Activated CD8-positive, alpha-beta T cell treated with anti-CD3 and anti-CD28 coated beads for 36 hours (primary cell): ENCODE measurements at regions of chr1 and their contacts with region 1.

Region 1: DNA sequence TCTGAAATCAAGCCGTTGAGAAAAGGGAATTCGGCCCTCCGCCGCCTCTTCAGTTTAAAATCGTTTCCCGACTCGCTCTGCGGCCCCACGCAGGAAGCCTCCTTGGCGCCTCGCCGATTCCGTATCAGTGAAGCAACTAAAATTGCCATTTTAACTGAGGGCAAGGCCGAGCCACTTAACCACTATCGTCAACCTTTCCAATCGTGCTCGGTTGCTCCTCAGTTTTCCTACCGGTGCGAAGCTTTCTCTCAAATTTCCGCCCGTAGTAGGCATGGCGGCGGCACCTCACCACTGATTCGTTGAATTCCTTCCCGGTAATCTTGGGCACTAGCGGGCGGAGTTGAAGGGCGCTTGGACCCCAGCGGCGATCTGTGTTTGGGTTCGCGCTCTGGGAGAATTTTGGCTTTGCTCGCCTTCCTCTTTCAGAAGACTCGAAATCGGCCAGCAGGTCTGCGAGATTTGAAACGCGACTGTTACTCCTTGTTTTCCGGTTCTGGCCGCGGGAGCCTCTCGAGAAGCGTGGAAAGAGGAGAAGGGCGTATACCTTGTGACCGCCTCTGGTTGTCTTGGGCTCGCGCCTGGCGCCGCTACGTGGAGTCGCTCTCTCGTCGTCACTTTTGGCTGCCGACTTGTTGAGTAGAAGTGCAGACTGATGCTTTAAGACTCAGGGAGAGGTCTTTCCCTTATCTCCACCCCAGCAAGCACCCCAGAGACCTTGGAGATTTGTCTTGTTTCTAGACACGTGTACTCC is at the starts of genes CENPL and DARS2:
- DNase-seq: peak; percentile 95
- ATAC-seq: peak; percentile 90
- H3K4me3 Mint-ChIP-seq: peak within 1 kb of the TSS; percentile 94
- H3K27ac Mint-ChIP-seq: peak within 1 kb of the TSS; percentile 99
- H3K4me1 Mint-ChIP-seq: peaks cover 50% of the 10 kb centered on the region
- H3K27me3 Mint-ChIP-seq: no peaks in the 10 kb centered on the region
- CTCF ChIP-seq: no peak
- total RNA-seq, gene CENPL: 20.9 to 23.3 TPM
- total RNA-seq, gene DARS2: 46.7 to 49.5 TPM

Region 2: GRCh38 chr1:173429471-173430402 is 394.8 kb before region 1 on chr1:
- CTCF ChIA-PET with region 1: interaction called, 37 read pairs
- POLR2A ChIA-PET with region 1: interaction called, 8 read pairs
- intact Hi-C with region 1: loop called (anchors 2 kb)
- DNase-seq: peak; percentile 84
- ATAC-seq: peak; percentile 85
- H3K4me3 Mint-ChIP-seq: peak overlapping the region; percentile 62
- H3K27ac Mint-ChIP-seq: peak overlapping the region; percentile 86
- H3K4me1 Mint-ChIP-seq: peaks cover 25% of the 10 kb centered on the region
- H3K27me3 Mint-ChIP-seq: no peaks in the 10 kb centered on the region
- CTCF ChIP-seq: peak; percentile 88

Region 3: GRCh38 chr1:173476664-173477285 is 347.7 kb before region 1 on chr1:
- CTCF ChIA-PET with region 1: no interaction called
- POLR2A ChIA-PET with region 1: interaction called, 11 read pairs
- intact Hi-C with region 1: no loop called
- DNase-seq: peak; percentile 84
- ATAC-seq: peak; percentile 84
- H3K4me3 Mint-ChIP-seq: peak overlapping the region; percentile 83
- H3K27ac Mint-ChIP-seq: peak overlapping the region; percentile 95
- H3K4me1 Mint-ChIP-seq: peaks cover 61% of the 10 kb centered on the region
- H3K27me3 Mint-ChIP-seq: no peaks in the 10 kb centered on the region
- CTCF ChIP-seq: no peak

Region 4: GRCh38 chr1:173648880-173649605 is 175.5 kb before region 1 on chr1:
- CTCF ChIA-PET with region 1: no interaction called
- POLR2A ChIA-PET with region 1: no interaction called
- intact Hi-C with region 1: no loop called
- DNase-seq: no peak
- ATAC-seq: no peak
- H3K4me3 Mint-ChIP-seq: no peak overlapping the region
- H3K27ac Mint-ChIP-seq: no peak overlapping the region
- H3K4me1 Mint-ChIP-seq: no peaks in the 10 kb centered on the region
- H3K27me3 Mint-ChIP-seq: no peaks in the 10 kb centered on the region
- CTCF ChIP-seq: no peak

Region 5: DNA sequence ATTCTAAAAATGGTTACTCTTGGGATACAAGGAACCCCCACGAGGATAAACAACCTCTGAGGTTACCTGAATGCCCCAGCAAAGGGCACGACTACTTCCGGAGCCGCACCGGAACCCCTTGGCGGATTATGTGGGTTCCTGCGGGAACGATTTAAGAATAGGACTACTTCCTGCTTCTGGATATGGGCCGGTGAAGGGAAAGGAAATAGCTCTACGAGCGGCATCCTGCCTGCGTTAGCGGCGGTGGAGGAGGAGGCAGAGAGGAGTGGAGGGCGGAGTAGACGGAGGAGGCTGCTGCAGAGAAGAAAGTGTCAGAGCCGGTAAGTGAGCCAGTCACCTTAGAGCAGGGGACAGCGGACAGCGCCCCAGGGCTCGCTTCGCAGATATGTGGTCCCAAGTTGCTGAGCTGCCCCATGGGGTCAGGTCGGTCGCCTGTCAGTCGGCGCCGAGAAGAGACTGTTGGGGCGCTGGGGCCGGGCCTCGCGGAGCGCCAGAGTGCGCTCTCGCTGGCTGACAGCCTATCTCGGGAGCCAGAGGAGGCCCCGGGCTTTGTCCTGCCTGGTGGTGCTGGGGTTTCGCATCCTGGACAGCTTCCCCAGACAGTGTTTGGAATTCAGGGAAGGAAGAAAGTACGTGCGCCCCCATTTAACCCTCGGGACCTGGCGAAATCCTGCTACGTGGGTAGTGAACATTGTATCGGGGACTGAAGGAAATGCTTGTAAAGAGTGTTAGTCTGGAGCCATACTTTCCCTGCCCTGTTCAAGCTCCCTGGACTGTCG is 109.6 kb before region 1 on chr1 and contains the start of gene KLHL20:
- CTCF ChIA-PET with region 1: interaction called, 7 read pairs
- POLR2A ChIA-PET with region 1: interaction called, 6 read pairs
- intact Hi-C with region 1: loop called (anchors 5 kb)
- DNase-seq: peak; percentile 90
- ATAC-seq: peak; percentile 98
- H3K4me3 Mint-ChIP-seq: peak within 1 kb of the TSS; percentile 92
- H3K27ac Mint-ChIP-seq: peak within 1 kb of the TSS; percentile 94
- H3K4me1 Mint-ChIP-seq: peaks cover 13% of the 10 kb centered on the region
- H3K27me3 Mint-ChIP-seq: peaks cover 12% of the 10 kb centered on the region
- CTCF ChIP-seq: no peak
- total RNA-seq, gene KLHL20: 14.5 to 15.8 TPM

Region 6: DNA sequence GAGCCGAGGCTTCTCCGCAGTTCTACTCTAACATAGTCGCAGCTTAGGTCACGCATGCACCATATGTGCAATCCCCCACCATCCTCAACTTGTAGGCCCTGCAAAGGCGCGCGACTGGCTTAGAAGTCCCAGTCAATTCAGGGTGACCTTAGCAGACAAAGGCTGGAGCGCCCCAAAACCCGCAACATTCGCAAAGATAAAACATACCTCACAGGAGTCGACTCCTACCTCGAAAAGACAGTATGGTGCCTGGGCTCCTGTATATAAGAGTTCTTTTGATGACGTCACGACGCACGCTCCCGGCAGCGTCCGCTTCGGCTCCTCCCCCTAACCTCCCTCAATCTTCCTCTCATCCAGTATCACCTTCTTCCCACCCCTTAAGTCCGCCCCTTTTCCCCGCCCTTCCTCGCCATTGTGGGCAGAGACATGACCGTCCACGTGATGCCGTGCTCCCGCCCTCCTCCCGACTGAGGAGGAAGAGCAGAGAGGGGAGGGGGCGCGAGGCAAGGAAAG is 43.3 kb after region 1 on chr1 and contains the start of gene GAS5:
- CTCF ChIA-PET with region 1: no interaction called
- POLR2A ChIA-PET with region 1: interaction called, 29 read pairs
- intact Hi-C with region 1: loop called (anchors 2 kb)
- DNase-seq: peak; percentile 100
- ATAC-seq: peak; percentile 80
- H3K4me3 Mint-ChIP-seq: peak within 1 kb of the TSS; percentile 95
- H3K27ac Mint-ChIP-seq: peak within 1 kb of the TSS; percentile 97
- H3K4me1 Mint-ChIP-seq: peaks cover 52% of the 10 kb centered on the region
- H3K27me3 Mint-ChIP-seq: no peaks in the 10 kb centered on the region
- CTCF ChIP-seq: no peak
- total RNA-seq, gene GAS5: 1,276 to 1,298 TPM

Region 7: DNA sequence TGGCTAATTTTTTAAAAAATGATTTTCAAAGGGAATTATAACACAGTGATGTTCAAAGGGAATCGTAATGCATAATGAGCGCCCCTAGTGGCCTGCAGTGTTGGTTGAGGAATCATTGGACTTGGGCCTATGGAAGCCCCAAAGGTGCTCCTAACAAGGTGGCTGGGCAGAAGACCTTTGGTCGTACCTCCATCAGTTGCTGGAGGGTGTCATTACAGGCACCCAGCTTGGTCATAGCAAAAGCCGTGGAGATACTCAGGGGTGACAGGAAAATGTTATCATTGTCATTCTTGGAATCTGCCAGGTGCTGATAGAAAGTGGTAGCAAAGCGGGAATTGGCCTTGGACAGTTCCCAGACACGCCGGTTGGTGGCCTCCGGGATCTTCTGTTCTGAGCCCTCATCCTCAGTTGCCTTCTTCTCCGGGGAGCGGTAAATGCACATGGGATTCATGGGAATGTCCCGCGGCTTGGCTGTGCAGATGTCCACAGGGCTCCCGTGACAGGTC is 89.9 kb after region 1 on chr1:
- CTCF ChIA-PET with region 1: no interaction called
- POLR2A ChIA-PET with region 1: no interaction called
- intact Hi-C with region 1: no loop called
- DNase-seq: peak; percentile 54
- ATAC-seq: no peak
- H3K4me3 Mint-ChIP-seq: no peak overlapping the region
- H3K27ac Mint-ChIP-seq: no peak overlapping the region
- H3K4me1 Mint-ChIP-seq: no peaks in the 10 kb centered on the region
- H3K27me3 Mint-ChIP-seq: no peaks in the 10 kb centered on the region
- CTCF ChIP-seq: peak; percentile 62

Region 8: DNA sequence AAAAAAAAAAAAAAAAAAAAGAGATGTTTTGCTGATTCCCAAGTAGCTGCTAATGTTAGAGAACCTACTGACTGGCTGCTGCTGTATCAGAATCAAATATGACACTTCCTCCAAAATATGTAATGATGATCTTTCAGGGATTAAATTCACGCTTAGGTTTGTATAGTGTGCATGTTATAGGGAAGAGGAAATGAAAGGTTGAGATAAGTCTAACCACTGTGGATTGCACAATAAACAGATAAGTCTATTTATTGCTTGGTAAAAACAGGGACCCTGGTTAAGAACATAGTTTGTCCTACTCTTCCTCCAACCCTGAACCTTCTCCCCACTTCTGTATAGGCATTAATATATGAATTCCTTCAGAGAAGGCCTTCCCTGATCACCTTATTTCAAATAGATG is 184.5 kb after region 1 on chr1:
- CTCF ChIA-PET with region 1: no interaction called
- POLR2A ChIA-PET with region 1: no interaction called
- intact Hi-C with region 1: no loop called
- DNase-seq: no peak
- ATAC-seq: no peak
- H3K4me3 Mint-ChIP-seq: no peak overlapping the region
- H3K27ac Mint-ChIP-seq: peak overlapping the region; percentile 40
- H3K4me1 Mint-ChIP-seq: peaks cover 35% of the 10 kb centered on the region
- H3K27me3 Mint-ChIP-seq: no peaks in the 10 kb centered on the region
- CTCF ChIP-seq: no peak